ENCODE measurements at regions of chrX and their contacts with region 1.

Region 1: DNA sequence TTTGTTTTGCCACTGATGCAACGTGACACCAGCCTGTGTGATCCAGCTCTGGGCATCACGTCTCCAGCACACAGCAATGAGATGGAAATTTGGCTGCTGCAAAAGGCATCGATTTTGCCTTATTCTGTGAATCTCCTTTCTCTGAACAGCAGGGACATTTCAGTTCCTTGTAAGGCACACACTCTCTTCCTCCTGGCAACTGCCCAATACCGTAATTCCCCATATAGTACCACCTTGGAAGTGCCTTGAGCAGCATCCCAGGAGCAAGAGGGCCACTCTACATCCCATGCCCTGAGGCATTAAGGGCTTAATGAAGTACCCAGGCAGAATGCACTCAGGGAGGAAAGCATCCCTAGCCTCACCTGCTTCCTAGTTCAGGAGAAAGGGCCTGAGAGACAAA is 10.5 kb upstream of the MAMLD1 start:
- DNase-seq: no peak
- H3K4me3 ChIP-seq: no peak overlapping the region
- H3K27ac ChIP-seq: no peak overlapping the region
- H3K4me1 ChIP-seq: peaks cover 15% of the 10 kb centered on the region
- H3K27me3 ChIP-seq: no peaks in the 10 kb centered on the region
- CTCF ChIP-seq: no peak

Region 2: DNA sequence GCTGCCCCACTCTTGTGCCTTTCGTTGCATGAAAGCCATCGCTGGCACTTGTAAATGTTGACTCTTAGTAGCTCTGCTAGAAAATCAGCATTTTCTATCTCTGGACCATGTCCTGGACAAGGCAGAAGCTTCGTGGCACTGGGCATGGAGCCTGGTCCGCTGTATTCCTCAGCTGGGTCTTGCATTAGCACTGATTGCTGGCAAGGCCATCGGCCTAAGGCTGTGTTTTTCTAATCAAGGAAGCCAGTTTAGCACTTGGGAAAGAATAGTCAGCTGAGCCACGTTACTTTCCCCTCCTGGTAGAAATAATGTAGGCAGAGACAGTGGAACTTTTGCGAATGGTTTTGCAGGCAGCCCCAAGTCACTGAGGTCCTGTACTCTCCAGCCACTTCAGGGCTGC is 234.1 kb before region 1 on chrX:
- CTCF ChIA-PET with region 1: no interaction called
- POLR2A ChIA-PET with region 1: no interaction called
- intact Hi-C with region 1: no loop called
- DNase-seq: no peak
- H3K4me3 ChIP-seq: no peak overlapping the region
- H3K27ac ChIP-seq: no peak overlapping the region
- H3K4me1 ChIP-seq: no peaks in the 10 kb centered on the region
- H3K27me3 ChIP-seq: no peaks in the 10 kb centered on the region
- CTCF ChIP-seq: no peak

Region 3: DNA sequence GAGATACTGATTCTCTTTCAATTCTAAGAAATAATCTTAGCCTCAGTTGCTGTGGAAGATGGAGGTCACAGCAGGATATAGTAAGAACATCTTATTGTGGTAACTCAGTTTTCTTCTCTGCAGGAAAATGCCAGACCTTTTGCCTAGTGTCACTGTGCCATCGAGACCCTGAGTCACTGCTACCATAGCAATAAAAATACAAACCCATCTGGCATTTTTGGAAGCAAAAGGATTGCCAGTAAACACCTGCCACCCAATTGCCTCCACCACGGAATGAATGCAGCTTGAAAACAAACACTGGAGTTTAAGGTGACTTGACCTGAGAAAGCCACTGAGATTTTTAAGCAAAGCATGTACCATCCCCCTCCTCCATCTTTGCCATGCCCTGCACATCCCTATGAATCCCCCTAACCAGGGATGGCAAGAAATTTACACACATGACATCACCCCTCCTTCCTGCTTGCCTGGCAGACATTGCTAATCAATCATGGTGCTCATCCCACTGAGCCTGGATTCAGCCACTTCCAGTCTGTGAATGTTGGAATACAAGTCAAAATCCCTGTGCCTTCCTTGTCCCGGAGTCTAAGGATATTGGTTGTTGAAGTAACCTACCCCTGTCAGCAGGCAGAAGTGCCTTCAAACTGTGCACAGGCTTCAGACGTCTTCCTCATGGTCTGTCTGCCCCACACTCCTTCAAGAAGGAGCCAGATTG is 49.0 kb before region 1 on chrX:
- CTCF ChIA-PET with region 1: no interaction called
- POLR2A ChIA-PET with region 1: no interaction called
- intact Hi-C with region 1: loop called (anchors 2 kb)
- DNase-seq: peak; percentile 12 to 87
- H3K4me3 ChIP-seq: no peak overlapping the region; the same call in 1 of the 2 replicates
- H3K27ac ChIP-seq: peak overlapping the region; percentile 30
- H3K4me1 ChIP-seq: peaks cover 35% of the 10 kb centered on the region
- H3K27me3 ChIP-seq: no peaks in the 10 kb centered on the region
- CTCF ChIP-seq: no peak

Measured in PC-9 (cell line).